T-cell (primary cell): ENCODE measurements at regions of chr12 and their contacts with region 1.

Region 1: GRCh38 chr12:32755654-32756475 is at the start of gene YARS2:
- DNase-seq: peak; percentile 68 to 96 (median 79)
- ATAC-seq: peak; percentile 91 to 92 (median 92)
- H3K4me3 ChIP-seq: peak within 1 kb of the TSS; percentile 93 to 97
- H3K4me3 Mint-ChIP-seq: peak within 1 kb of the TSS; percentile 84 to 96 (median 86)
- H3K27ac ChIP-seq: peak within 1 kb of the TSS; percentile 90
- H3K27ac Mint-ChIP-seq: peak within 1 kb of the TSS; percentile 84 to 93
- H3K4me1 ChIP-seq: peaks cover 10 to 13% of the 10 kb centered on the region in 2 experiments
- H3K4me1 Mint-ChIP-seq: peaks cover 18 to 28% (median 21%) of the 10 kb centered on the region in 3 donors
- H3K27me3 ChIP-seq: peaks cover 0 to under 1% of the 10 kb centered on the region in 2 experiments
- H3K27me3 Mint-ChIP-seq: no peaks in the 10 kb centered on the region
- total RNA-seq, gene YARS2: 14.8 to 20.4 (median 18.0) TPM

Region 2: DNA sequence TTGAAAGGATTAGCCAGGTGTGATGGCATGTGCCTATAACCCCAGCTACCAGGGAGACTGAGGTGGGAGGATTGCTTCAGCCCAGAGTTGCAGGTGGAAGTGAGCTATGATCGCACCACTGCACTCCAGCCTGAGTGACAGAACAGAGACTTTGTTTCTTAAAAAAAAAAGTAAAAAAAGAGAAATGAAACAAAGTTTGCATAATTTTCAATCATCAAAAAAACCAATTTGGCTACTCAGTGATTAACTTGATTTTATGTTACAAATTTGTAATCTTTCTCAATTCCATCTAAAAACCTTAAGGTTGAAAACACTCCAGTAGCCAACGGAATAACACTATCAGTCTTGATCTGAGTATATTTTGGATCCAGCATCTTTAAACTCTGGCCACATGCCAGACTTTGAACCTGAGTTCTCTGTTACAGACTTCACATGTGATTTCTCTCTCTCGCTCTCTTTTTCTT is 1152.3 kb before region 1 on chr12:
- CTCF ChIA-PET with region 1: no interaction called
- POLR2A ChIA-PET with region 1: interaction called in 1 of 2 experiments, 14 read pairs
- DNase-seq: peak in 1 of 35 experiments; percentile 10
- ATAC-seq: no peak
- H3K4me3 ChIP-seq: no peak overlapping the region
- H3K4me3 Mint-ChIP-seq: no peak overlapping the region
- H3K27ac ChIP-seq: no peak overlapping the region
- H3K27ac Mint-ChIP-seq: no peak overlapping the region
- H3K4me1 ChIP-seq: no peaks in the 10 kb centered on the region
- H3K4me1 Mint-ChIP-seq: peaks cover 0 to 2% (median 0%) of the 10 kb centered on the region in 3 donors
- H3K27me3 ChIP-seq: peaks cover 0 to 4% of the 10 kb centered on the region in 2 experiments
- H3K27me3 Mint-ChIP-seq: peaks cover 5 to 8% of the 10 kb centered on the region in 2 donors

Region 3: DNA sequence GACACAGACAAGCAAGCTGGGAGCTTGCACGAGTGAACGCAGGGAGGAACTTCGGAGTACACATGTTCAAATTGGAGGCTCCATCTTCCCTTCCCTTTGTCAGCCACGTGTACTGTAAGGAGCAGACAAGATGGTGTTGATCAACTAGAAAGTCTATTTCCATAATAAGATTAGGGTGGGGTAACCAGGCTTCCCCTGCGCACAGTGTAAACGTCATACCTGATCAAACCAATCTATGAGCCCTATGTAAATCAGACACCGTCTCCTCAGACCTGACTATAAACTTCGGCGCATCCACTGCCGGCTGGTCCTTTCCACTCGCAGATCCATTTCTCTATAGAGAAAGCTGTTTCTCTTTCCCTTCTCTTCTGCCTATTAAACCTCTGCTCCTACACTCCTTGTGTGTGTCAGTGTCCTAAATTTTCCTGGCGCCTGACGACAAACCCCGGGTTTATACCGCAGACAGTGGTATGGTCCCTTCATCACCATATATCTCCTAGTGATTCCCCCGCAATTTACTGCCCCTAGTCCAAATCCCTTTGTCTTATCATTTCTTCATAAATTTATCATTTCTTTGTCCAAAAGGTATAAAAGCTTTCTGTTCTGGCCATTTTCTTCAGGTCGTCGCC is 1103.9 kb before region 1 on chr12:
- CTCF ChIA-PET with region 1: interaction called, 5 to 45 read pairs
- POLR2A ChIA-PET with region 1: no interaction called
- DNase-seq: no peak
- ATAC-seq: no peak
- H3K4me3 ChIP-seq: no peak overlapping the region
- H3K4me3 Mint-ChIP-seq: peak overlapping the region in 2 of 3 donors; percentile 44 to 50
- H3K27ac ChIP-seq: no peak overlapping the region
- H3K27ac Mint-ChIP-seq: peak overlapping the region; percentile 91 to 96
- H3K4me1 ChIP-seq: peaks cover 2 to 5% of the 10 kb centered on the region in 2 experiments
- H3K4me1 Mint-ChIP-seq: peaks cover 8 to 14% (median 10%) of the 10 kb centered on the region in 3 donors
- H3K27me3 ChIP-seq: no peaks in the 10 kb centered on the region
- H3K27me3 Mint-ChIP-seq: no peaks in the 10 kb centered on the region

Region 4: DNA sequence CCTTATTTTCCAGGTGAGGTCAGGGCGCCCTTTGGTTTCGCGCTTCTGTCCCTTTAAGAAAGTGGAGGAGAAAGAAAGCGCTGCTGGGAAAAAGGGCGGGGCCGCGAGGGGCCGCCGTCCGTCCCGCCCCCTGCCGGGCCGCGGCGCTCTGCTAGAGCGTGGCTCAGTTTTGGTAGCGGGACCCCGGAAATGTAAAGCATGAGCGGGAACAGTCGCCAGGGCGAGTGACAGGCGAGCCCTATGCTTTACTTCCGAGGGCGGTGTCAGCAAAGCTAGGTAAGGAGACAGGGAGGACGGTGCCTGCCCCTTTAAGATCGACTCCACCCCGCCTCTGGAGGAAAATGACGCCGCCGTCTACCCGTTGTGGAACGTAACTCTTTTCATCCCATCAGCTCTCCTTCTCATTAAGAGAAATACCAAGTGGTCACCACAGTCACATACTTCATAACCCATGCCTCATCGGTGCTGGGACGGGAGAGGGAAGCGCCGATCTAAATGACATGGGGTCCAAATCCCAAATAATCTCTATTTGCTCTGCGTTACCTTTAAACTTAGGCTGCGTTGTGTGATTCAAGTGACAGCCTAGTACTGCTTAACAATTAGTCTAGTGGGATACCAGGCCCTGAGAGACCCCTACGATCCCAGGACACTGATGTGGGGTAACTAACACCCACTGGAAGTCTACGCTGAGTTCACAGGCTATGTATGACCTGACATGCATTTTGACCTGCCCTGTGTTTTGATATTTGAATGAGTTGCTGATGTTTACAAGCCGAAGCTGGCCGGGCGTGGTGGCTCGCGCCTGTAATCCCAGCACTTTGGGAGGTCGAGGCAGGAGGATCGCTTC is 1096.6 kb before region 1 on chr12 and contains the start of gene ETFBKMT:
- CTCF ChIA-PET with region 1: interaction called, 3 to 45 read pairs
- POLR2A ChIA-PET with region 1: no interaction called
- DNase-seq: peak; percentile 83 to 96 (median 90)
- ATAC-seq: peak; percentile 99 to 100 (median 100)
- H3K4me3 ChIP-seq: peak within 1 kb of the TSS; percentile 68 to 88
- H3K4me3 Mint-ChIP-seq: peak within 1 kb of the TSS; percentile 93 to 97 (median 94)
- H3K27ac ChIP-seq: peak within 1 kb of the TSS; percentile 95
- H3K27ac Mint-ChIP-seq: peak within 1 kb of the TSS; percentile 96 to 99
- H3K4me1 ChIP-seq: peaks cover 6 to 16% of the 10 kb centered on the region in 2 experiments
- H3K4me1 Mint-ChIP-seq: peaks cover 11 to 23% (median 20%) of the 10 kb centered on the region in 3 donors
- H3K27me3 ChIP-seq: no peaks in the 10 kb centered on the region
- H3K27me3 Mint-ChIP-seq: no peaks in the 10 kb centered on the region
- total RNA-seq, gene ETFBKMT: 0.48 to 2.1 (median 1.6) TPM

Region 5: GRCh38 chr12:32455607-32456071 is 300.2 kb before region 1 on chr12:
- CTCF ChIA-PET with region 1: interaction called, 4 to 14 read pairs
- POLR2A ChIA-PET with region 1: no interaction called
- DNase-seq: peak in 4 of 35 experiments; percentile 2 to 60 (median 8)
- ATAC-seq: no peak
- H3K4me3 ChIP-seq: no peak overlapping the region
- H3K4me3 Mint-ChIP-seq: peak overlapping the region in 1 of 3 donors; percentile 6
- H3K27ac ChIP-seq: no peak overlapping the region
- H3K27ac Mint-ChIP-seq: no peak overlapping the region
- H3K4me1 ChIP-seq: no peaks in the 10 kb centered on the region
- H3K4me1 Mint-ChIP-seq: peaks cover 0 to 8% (median 4%) of the 10 kb centered on the region in 3 donors
- H3K27me3 ChIP-seq: no peaks in the 10 kb centered on the region
- H3K27me3 Mint-ChIP-seq: peaks cover 0 to 2% of the 10 kb centered on the region in 2 donors

Region 6: GRCh38 chr12:32695787-32696186 is 60.1 kb before region 1 on chr12:
- CTCF ChIA-PET with region 1: no interaction called
- POLR2A ChIA-PET with region 1: no interaction called
- DNase-seq: no peak
- ATAC-seq: no peak
- H3K4me3 ChIP-seq: no peak overlapping the region
- H3K4me3 Mint-ChIP-seq: no peak overlapping the region
- H3K27ac ChIP-seq: no peak overlapping the region
- H3K27ac Mint-ChIP-seq: no peak overlapping the region
- H3K4me1 ChIP-seq: no peaks in the 10 kb centered on the region
- H3K4me1 Mint-ChIP-seq: peaks cover 37 to 42% (median 37%) of the 10 kb centered on the region in 3 donors
- H3K27me3 ChIP-seq: no peaks in the 10 kb centered on the region
- H3K27me3 Mint-ChIP-seq: no peaks in the 10 kb centered on the region

Region 7: DNA sequence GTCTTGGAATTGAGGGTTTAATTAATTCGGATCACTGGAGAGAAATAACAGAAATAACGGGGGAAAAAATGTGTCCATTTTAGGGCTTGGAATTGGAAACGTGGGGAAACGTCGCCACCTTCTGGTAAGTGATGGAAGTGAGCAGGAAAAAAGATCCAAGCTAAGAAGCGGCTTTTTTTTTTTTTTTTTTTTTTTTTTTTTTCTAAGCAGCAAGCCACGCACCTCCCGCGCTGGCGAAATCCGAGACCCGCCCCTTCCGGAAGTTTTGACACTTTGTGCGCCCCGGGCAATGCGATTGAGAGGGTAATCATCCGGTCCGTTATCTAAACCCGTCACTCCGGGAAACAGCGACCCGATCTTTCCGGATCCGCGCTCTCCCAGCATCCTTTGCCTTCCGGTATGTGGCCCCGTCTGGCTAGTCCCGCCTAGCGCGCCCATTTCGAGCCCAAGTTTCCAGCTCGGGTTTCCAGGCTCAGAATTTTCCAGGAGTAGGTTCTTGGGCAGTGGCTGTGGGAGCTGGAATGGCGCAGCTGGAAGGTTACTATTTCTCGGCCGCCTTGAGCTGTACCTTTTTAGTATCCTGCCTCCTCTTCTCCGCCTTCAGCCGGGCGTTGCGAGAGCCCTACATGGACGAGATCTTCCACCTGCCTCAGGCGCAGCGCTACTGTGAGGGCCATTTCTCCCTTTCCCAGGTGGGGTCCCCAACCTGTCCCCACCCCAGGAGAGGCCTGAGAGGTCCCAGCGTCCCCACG is 1266.4 kb after region 1 on chr12 and contains the start of gene ALG10:
- CTCF ChIA-PET with region 1: interaction called, 26 to 84 read pairs
- POLR2A ChIA-PET with region 1: interaction called, 5 to 25 read pairs
- DNase-seq: peak; percentile 92 to 98 (median 96)
- ATAC-seq: peak; percentile 98 to 99 (median 98)
- H3K4me3 ChIP-seq: peak within 1 kb of the TSS; percentile 76 to 84
- H3K4me3 Mint-ChIP-seq: peak within 1 kb of the TSS; percentile 93 to 95 (median 94)
- H3K27ac ChIP-seq: peak within 1 kb of the TSS; percentile 95
- H3K27ac Mint-ChIP-seq: peak within 1 kb of the TSS; percentile 95 to 99
- H3K4me1 ChIP-seq: peaks cover 5 to 7% of the 10 kb centered on the region in 2 experiments
- H3K4me1 Mint-ChIP-seq: peaks cover 20 to 33% (median 23%) of the 10 kb centered on the region in 3 donors
- H3K27me3 ChIP-seq: no peaks in the 10 kb centered on the region
- H3K27me3 Mint-ChIP-seq: no peaks in the 10 kb centered on the region
- total RNA-seq, gene ALG10: 11.4 to 19.5 (median 15.7) TPM